Endothelial cell of umbilical vein (primary cell): ENCODE measurements at regions of chr2 and their contacts with region 1.

Region 1: DNA sequence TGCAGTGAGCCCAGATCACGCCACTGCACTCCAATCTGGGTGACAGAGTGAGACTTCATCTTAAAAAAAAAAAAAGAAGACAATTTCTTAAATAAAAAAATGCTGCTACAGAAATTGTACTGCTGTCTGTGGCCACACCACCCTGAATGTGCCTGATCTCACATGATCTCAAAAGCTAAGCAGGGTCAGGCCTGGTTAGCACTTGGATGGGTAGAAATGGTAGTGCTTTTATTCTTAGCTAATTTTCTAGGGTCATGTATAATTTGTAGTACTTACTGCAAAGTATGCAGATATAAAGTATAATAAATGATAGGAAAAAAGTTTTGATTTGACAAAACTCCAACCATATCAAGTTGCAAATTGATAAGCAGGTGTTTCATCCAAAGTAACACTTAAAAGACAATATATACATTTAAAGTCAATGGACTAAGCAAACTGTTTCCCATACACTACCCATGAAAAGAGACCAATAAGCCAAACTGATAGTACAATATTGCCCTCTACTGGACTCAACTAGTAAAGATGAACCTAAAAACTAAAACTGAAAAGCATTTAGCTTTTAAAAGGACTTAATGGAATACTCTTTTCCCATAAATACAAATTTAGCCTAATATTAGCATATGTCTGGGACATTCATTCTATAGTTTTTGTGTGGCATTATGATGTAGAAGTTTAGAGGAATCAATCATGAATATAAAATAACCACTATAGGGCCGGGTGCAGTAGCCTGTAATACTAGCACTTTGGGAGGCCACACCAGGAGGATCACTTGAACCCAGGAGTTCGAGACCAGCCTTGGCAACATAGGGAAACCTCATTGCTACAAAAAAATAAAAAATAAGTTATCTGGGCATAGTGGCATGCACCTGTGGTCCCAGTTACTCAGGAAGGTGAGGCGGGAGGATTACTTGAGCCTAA is 18.6 kb upstream of the PEX13 start:
- DNase-seq: peak; percentile 70
- H3K4me3 ChIP-seq: no peak overlapping the region
- H3K27ac ChIP-seq: no peak overlapping the region
- H3K4me1 ChIP-seq: no peaks in the 10 kb centered on the region
- H3K27me3 ChIP-seq: no peaks in the 10 kb centered on the region
- CTCF ChIP-seq: peak; percentile 20 to 37
- POLR2A ChIP-seq: no peak

Region 2: GRCh38 chr2:60674524-60675165 is 324.2 kb before region 1 on chr2:
- CTCF ChIA-PET with region 1: interaction called, 15 read pairs
- POLR2A ChIA-PET with region 1: no interaction called
- dilution Hi-C with region 1: no loop called
- intact Hi-C with region 1: no loop called
- DNase-seq: peak; percentile 64
- H3K4me3 ChIP-seq: no peak overlapping the region
- H3K27ac ChIP-seq: no peak overlapping the region
- H3K4me1 ChIP-seq: no peaks in the 10 kb centered on the region
- H3K27me3 ChIP-seq: peaks cover 0 to 4% of the 10 kb centered on the region in 2 experiments
- CTCF ChIP-seq: peak; percentile 87 to 92
- POLR2A ChIP-seq: no peak

Region 3: GRCh38 chr2:60780721-60781120 is 218.2 kb before region 1 on chr2:
- CTCF ChIA-PET with region 1: interaction called, 11 read pairs
- POLR2A ChIA-PET with region 1: no interaction called
- dilution Hi-C with region 1: no loop called
- intact Hi-C with region 1: no loop called
- DNase-seq: no peak
- H3K4me3 ChIP-seq: no peak overlapping the region
- H3K27ac ChIP-seq: no peak overlapping the region
- H3K4me1 ChIP-seq: no peaks in the 10 kb centered on the region
- H3K27me3 ChIP-seq: no peaks in the 10 kb centered on the region
- CTCF ChIP-seq: no peak
- POLR2A ChIP-seq: no peak

Region 4: GRCh38 chr2:60806988-60807681 is 191.8 kb before region 1 on chr2:
- CTCF ChIA-PET with region 1: interaction called, 51 read pairs
- POLR2A ChIA-PET with region 1: no interaction called
- dilution Hi-C with region 1: no loop called
- intact Hi-C with region 1: no loop called
- DNase-seq: no peak
- H3K4me3 ChIP-seq: no peak overlapping the region
- H3K27ac ChIP-seq: no peak overlapping the region
- H3K4me1 ChIP-seq: peaks cover 5% of the 10 kb centered on the region
- H3K27me3 ChIP-seq: no peaks in the 10 kb centered on the region
- CTCF ChIP-seq: no peak
- POLR2A ChIP-seq: no peak

Region 5: DNA sequence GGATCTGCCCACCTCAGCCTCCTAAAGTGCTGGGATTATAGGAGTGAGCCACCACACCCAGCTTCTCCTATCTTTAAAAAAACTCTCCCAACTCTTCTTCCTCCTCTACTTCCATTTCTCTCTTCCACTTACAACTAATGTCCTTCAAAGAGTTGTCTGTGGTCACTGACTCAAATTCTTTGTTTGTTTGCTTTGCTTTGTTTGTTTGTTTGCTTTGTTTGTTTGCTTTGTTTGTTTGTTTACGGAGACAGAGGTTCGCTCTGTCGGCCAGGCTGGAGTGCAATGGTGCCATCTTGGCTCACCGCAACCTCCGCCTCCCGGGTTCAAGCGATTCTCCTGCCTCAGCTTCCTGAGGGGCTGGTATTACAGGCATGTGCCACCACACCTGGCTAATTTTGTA is 153.6 kb before region 1 on chr2:
- CTCF ChIA-PET with region 1: no interaction called
- POLR2A ChIA-PET with region 1: no interaction called
- dilution Hi-C with region 1: no loop called
- intact Hi-C with region 1: no loop called
- DNase-seq: no peak
- H3K4me3 ChIP-seq: no peak overlapping the region
- H3K27ac ChIP-seq: no peak overlapping the region
- H3K4me1 ChIP-seq: no peaks in the 10 kb centered on the region
- H3K27me3 ChIP-seq: no peaks in the 10 kb centered on the region
- CTCF ChIP-seq: no peak
- POLR2A ChIP-seq: no peak

Region 6: DNA sequence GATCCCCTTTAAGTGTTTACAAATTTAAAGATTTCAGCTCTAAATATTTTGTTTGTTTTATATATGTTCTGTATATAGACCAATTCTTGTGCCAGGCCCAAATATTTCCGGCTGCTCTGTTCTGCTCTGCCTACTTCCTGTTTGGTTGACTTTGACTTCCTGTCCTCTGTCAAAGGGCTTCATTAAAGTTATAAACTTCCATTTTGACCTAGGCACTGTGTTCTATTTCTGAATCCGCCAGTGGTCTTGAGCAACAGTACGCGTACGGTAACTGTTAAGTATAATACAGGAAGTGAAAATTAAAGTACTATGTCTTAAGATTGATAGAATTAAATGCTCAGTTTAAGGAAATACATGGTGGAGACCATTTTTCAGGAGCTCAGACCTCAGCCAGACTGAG is 131.0 kb before region 1 on chr2:
- CTCF ChIA-PET with region 1: no interaction called
- POLR2A ChIA-PET with region 1: no interaction called
- dilution Hi-C with region 1: no loop called
- intact Hi-C with region 1: no loop called
- DNase-seq: no peak
- H3K4me3 ChIP-seq: no peak overlapping the region
- H3K27ac ChIP-seq: no peak overlapping the region
- H3K4me1 ChIP-seq: peaks cover 13% of the 10 kb centered on the region
- H3K27me3 ChIP-seq: no peaks in the 10 kb centered on the region
- CTCF ChIP-seq: no peak
- POLR2A ChIP-seq: no peak

Region 7: DNA sequence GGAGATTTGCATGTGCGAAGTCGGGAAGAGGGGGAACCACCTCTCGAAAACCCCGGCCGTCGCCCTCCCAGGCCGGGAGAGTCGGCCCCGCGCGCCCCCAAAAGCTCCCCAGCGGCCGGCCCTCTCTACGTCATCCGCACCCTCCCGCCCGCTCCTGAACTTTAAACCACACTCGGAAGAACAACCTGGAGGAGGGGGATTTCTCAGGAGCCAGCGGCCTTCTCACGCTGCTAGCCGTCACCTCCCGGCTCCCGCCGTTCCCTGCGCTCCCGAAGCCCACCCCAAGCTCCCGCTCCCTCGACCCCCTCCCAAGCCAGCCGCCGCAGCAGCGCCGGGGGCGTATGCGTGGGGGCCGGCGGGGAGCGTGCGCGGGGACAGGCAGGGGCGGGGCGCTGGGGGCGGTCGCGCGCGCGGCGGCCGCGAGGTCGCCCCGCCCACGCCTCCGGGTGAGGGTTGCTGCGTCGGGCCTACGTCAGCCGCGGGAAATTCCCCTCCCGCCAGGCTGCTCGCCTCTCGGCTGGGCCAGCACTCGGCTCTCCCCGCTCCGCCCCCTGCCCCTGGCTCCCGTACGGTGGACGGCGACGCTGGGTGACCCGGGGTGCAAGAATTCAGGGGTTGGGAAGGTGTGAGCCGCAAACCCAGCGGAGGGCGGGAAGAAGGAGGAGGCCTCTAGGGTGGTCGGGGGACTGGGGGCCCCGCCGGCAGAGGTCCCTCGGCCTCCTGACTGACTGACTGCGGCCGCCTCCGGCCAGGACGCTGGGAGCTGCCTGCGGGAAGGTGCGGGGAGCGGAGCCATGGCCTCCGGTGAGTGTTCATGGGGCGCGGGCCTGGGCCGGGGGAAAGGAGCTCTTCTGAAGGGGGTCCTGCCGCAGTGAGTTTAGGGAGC is 117.6 kb before region 1 on chr2 and contains the start of gene REL:
- CTCF ChIA-PET with region 1: interaction called, 19 read pairs
- POLR2A ChIA-PET with region 1: no interaction called
- dilution Hi-C with region 1: no loop called
- intact Hi-C with region 1: loop called (anchors 5 kb)
- DNase-seq: peak; percentile 90
- H3K4me3 ChIP-seq: peak within 1 kb of the TSS; percentile 94 to 99 (median 98)
- H3K27ac ChIP-seq: peak within 1 kb of the TSS; percentile 94
- H3K4me1 ChIP-seq: peaks cover 33% of the 10 kb centered on the region
- H3K27me3 ChIP-seq: no peaks in the 10 kb centered on the region
- CTCF ChIP-seq: peak in 1 of 2 donors; percentile 5
- POLR2A ChIP-seq: no peak
- total RNA-seq, gene REL: 11.7 and 12.8 TPM in 2 replicates

Region 8: GRCh38 chr2:60945341-60945740 is 53.5 kb before region 1 on chr2:
- CTCF ChIA-PET with region 1: interaction called, 12 read pairs
- POLR2A ChIA-PET with region 1: no interaction called
- dilution Hi-C with region 1: no loop called
- intact Hi-C with region 1: no loop called
- DNase-seq: no peak
- H3K4me3 ChIP-seq: no peak overlapping the region
- H3K27ac ChIP-seq: no peak overlapping the region
- H3K4me1 ChIP-seq: no peaks in the 10 kb centered on the region
- H3K27me3 ChIP-seq: no peaks in the 10 kb centered on the region
- CTCF ChIP-seq: no peak
- POLR2A ChIP-seq: no peak

Region 9: GRCh38 chr2:60976875-60977561 is 21.9 kb before region 1 on chr2:
- CTCF ChIA-PET with region 1: interaction called, 10 read pairs
- POLR2A ChIA-PET with region 1: no interaction called
- dilution Hi-C with region 1: no loop called
- intact Hi-C with region 1: no loop called
- DNase-seq: no peak
- H3K4me3 ChIP-seq: no peak overlapping the region
- H3K27ac ChIP-seq: no peak overlapping the region
- H3K4me1 ChIP-seq: no peaks in the 10 kb centered on the region
- H3K27me3 ChIP-seq: no peaks in the 10 kb centered on the region
- CTCF ChIP-seq: no peak
- POLR2A ChIP-seq: no peak